ENCODE measurements at regions of chr10 and their contacts with region 1.

Region 1: DNA sequence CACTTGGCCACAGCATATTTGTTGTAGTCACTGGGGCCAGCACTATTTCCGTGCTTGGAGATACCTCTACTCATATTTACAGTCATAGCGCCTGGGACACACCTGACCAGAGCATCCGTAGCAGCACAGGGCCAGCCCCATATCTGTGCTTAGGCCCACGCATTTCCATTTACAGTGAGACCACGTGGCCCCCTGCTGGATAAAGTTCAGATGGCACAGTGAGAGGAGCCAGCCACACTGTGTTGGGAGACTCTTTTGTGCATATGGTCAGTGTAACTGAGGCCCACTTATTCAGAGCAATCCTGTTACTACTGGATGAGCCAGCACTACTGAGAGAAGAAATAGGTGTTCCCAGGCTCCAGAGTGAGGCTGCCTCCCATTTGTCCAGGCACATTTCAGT is 455.3 kb downstream of the REEP3 start:
- DNase-seq: no peak
- ATAC-seq: peak; percentile 76
- H3K4me3 Mint-ChIP-seq: no peak overlapping the region
- H3K27ac Mint-ChIP-seq: no peak overlapping the region
- H3K4me1 Mint-ChIP-seq: peaks cover 23% of the 10 kb centered on the region
- H3K27me3 Mint-ChIP-seq: no peaks in the 10 kb centered on the region
- CTCF ChIP-seq: no peak

Region 2: DNA sequence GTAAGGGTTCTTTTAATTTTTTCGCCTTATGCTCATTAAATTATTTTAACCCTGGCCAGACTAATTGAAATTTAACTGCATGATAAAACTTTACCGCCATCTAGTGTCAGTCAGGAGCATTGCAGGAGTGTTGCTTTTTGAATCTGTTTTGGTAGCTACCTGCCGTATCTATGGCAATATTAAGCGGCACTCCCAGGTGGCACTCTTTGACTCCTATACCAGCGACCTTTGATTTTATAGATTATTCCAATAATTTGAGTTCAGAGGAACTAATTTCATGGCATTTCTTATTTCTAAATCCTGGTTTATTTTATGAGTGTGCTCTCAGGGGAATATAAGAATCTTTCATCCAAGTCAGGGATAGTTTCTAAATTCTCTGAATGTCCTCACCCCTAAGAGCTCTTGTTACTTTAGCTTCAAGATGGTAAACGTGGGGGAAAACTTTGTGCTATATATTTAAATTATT is 256.4 kb before region 1 on chr10:
- CTCF ChIA-PET with region 1: no interaction called
- POLR2A ChIA-PET with region 1: no interaction called
- intact Hi-C with region 1: no loop called
- DNase-seq: no peak
- ATAC-seq: peak; percentile 94
- H3K4me3 Mint-ChIP-seq: no peak overlapping the region
- H3K27ac Mint-ChIP-seq: no peak overlapping the region
- H3K4me1 Mint-ChIP-seq: peaks cover 12% of the 10 kb centered on the region
- H3K27me3 Mint-ChIP-seq: peaks cover 12% of the 10 kb centered on the region
- CTCF ChIP-seq: peak; percentile 100

Region 3: DNA sequence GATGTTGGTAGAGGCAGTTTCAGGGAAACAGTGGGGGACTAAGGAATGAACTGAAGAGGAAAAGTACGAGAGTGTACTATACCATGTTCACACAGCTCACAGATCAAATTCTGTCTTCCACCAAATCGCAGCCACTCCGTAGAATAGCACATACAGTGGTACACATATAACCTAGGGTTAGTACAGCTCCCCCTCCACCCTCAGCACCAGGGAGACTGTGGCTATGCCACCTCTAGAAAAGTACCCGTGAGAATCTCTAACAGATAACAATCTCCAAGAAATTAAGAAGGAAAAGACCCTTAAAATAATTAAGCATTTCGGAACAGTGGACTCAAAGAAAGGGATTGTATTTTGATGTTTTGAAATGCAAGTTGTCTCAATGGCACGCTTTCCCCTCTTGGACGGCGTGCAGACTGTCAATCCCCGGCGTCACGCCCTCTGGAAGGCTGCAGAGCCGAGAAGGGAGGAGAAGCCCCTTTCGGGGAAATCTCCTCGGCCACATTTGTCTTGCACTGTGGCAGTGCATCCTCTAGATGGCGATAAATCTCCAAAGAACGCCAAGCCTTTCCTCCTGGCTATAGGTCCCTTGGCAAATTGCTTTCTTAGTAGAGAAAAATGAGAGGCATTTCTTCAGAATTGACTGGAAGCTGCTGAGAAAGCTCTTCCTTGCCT is 110.3 kb before region 1 on chr10:
- CTCF ChIA-PET with region 1: interaction called, 5 read pairs
- POLR2A ChIA-PET with region 1: no interaction called
- intact Hi-C with region 1: loop called (anchors 2 kb)
- DNase-seq: no peak
- ATAC-seq: no peak
- H3K4me3 Mint-ChIP-seq: no peak overlapping the region
- H3K27ac Mint-ChIP-seq: no peak overlapping the region
- H3K4me1 Mint-ChIP-seq: peaks cover 6% of the 10 kb centered on the region
- H3K27me3 Mint-ChIP-seq: peaks cover 33% of the 10 kb centered on the region
- CTCF ChIP-seq: peak; percentile 55

Region 4: GRCh38 chr10:63935705-63936104 is 40.8 kb before region 1 on chr10:
- CTCF ChIA-PET with region 1: no interaction called
- POLR2A ChIA-PET with region 1: no interaction called
- intact Hi-C with region 1: loop called (anchors 1 kb)
- DNase-seq: no peak
- ATAC-seq: no peak
- H3K4me3 Mint-ChIP-seq: no peak overlapping the region
- H3K27ac Mint-ChIP-seq: no peak overlapping the region
- H3K4me1 Mint-ChIP-seq: no peaks in the 10 kb centered on the region
- H3K27me3 Mint-ChIP-seq: peaks cover 5% of the 10 kb centered on the region
- CTCF ChIP-seq: no peak

Region 5: GRCh38 chr10:63987212-63987611 is 10.7 kb after region 1 on chr10:
- CTCF ChIA-PET with region 1: interaction called, 6 read pairs
- POLR2A ChIA-PET with region 1: no interaction called
- intact Hi-C with region 1: loop called (anchors 1 kb)
- DNase-seq: no peak
- ATAC-seq: no peak
- H3K4me3 Mint-ChIP-seq: no peak overlapping the region
- H3K27ac Mint-ChIP-seq: no peak overlapping the region
- H3K4me1 Mint-ChIP-seq: peaks cover 24% of the 10 kb centered on the region
- H3K27me3 Mint-ChIP-seq: no peaks in the 10 kb centered on the region
- CTCF ChIP-seq: no peak

Region 6: GRCh38 chr10:64041185-64041988 is 64.8 kb after region 1 on chr10:
- CTCF ChIA-PET with region 1: interaction called, 8 read pairs
- POLR2A ChIA-PET with region 1: no interaction called
- intact Hi-C with region 1: loop called (anchors 2 kb)
- DNase-seq: peak; percentile 65
- ATAC-seq: peak; percentile 97
- H3K4me3 Mint-ChIP-seq: peak overlapping the region; percentile 75
- H3K27ac Mint-ChIP-seq: peak overlapping the region; percentile 53
- H3K4me1 Mint-ChIP-seq: peaks cover 8% of the 10 kb centered on the region
- H3K27me3 Mint-ChIP-seq: peaks cover 2% of the 10 kb centered on the region
- CTCF ChIP-seq: peak; percentile 90

Region 7: GRCh38 chr10:64286533-64286932 is 310.0 kb after region 1 on chr10:
- CTCF ChIA-PET with region 1: no interaction called
- POLR2A ChIA-PET with region 1: no interaction called
- intact Hi-C with region 1: no loop called
- DNase-seq: no peak
- ATAC-seq: no peak
- H3K4me3 Mint-ChIP-seq: no peak overlapping the region
- H3K27ac Mint-ChIP-seq: no peak overlapping the region
- H3K4me1 Mint-ChIP-seq: no peaks in the 10 kb centered on the region
- H3K27me3 Mint-ChIP-seq: no peaks in the 10 kb centered on the region
- CTCF ChIP-seq: no peak